Left ventricle myocardium superior (tissue), 1 donor: ENCODE measurements at regions of chr3 and their contacts with region 1.

Region 1: DNA sequence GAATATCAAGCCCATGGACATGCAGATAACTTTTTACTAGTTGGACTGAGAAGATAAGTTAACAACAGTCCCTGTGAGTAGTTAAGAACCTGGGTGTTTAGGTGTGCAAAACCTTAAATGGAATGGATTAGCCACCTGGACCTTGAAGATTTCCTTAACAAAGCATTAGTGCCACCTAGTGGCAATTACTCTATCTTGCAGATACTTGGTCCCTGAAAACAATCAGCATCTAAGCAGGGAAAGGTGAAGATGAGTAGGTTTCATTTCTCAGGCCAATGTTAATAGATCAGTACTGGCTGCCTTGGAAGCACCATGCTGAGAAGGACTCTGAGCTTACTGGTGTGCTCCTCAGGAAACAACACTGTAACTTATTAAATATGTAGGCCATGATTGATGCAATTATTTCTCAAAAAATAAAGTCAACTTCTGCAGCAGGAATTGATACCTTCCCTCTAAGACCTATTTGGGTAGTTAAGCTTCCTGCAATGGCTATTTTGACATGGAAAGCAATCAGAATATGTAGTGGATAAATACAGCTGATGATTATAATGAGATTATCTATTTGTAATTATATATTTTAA is 329.4 kb downstream of the TBC1D5 start:
- DNase-seq: no peak
- ATAC-seq: peak; percentile 59

Region 2: DNA sequence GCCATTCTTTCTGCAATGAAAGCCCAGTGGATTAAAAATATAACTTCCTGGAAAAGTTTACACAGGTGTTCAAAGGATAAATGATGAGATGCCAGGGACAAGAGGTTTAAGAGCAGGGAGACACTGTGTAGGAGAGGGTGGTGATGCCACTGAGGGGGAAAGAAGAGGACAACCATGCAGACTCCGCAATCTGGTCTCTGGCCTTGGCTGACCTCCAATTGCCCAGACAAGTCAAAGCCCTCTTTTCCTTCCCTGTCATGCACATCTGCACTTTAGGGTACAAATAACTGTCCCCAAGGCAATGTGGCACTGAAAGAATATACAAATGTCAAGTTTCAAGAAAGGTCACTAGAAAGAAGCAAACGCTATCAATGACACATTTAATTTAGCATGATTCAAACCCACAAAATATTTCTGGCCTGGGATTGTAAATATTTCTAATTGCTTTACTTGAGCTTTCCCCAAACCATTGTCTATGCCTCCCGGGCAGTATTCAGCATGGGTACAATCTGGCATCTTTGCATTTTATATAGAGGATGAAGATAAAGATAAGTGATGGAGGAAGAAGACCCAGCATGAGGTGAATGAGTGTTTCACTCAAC is 208.9 kb before region 1 on chr3:
- intact Hi-C with region 1: no loop called
- DNase-seq: no peak
- ATAC-seq: no peak

Region 3: DNA sequence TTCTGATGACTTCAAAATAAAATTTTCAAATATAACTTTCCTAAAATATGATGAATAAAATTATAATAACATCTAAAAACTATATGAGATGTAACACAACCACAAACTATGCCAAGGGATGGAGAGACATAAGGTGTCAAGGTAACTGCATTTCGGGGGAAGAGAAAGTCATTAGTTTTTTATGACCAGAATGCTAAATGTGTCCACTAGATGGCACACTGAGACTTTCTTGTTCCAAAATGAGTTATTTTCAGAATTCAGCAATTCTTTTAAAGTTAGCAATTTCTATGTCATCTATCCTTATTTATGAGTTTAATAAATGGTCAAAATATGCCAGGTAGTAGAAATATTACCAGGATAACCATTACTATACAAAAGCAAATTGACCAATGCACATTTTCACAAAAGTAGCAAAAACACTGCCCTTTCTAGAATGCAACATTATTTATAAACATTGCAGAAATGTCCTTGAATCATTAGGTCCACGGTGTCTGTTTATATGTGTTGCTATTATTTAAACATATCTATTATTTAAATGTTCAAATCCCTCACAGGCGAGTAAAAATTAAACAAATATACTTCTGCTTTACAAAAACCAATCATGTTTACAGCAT is 154.1 kb before region 1 on chr3:
- intact Hi-C with region 1: loop called (anchors 5 kb)
- DNase-seq: no peak
- ATAC-seq: no peak